ENCODE measurements at regions of chr1 and their contacts with region 1.

Region 1: GRCh38 chr1:232508130-232508701 is 121.7 kb downstream of the SIPA1L2 start:
- DNase-seq: peak; percentile 40
- H3K4me3 Mint-ChIP-seq: no peak overlapping the region
- H3K27ac Mint-ChIP-seq: peak overlapping the region; percentile 70
- H3K4me1 Mint-ChIP-seq: peaks cover 40% of the 10 kb centered on the region
- H3K27me3 Mint-ChIP-seq: no peaks in the 10 kb centered on the region
- CTCF ChIP-seq: peak; percentile 5

Region 2: DNA sequence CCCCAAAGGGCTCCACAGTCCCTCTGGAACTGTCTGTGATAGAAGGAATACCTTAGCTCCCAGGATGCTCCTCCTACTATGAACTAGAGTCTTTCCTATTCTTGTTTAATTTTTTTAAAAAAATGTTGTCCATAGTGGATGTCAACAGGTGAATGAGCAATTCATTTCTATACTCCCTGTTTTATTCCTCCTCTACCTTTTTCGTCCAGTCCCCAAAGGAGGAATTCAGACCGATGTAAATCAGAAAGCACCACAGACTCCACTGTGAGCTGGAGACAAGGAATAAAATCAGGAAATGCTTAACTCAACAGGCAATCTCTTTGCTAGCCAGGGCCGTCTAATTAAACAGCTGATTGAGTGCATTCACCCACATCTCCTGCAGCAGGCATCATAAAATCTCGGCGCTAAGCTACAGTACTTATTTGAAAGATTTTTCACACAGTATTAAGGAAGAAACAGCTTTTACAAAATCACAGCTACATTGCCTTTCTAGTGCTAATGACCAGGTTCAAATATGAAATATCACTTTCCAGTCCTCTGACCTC is 259.9 kb before region 1 on chr1:
- CTCF ChIA-PET with region 1: no interaction called
- POLR2A ChIA-PET with region 1: no interaction called
- intact Hi-C with region 1: no loop called
- DNase-seq: no peak
- H3K4me3 Mint-ChIP-seq: no peak overlapping the region
- H3K27ac Mint-ChIP-seq: no peak overlapping the region
- H3K4me1 Mint-ChIP-seq: no peaks in the 10 kb centered on the region
- H3K27me3 Mint-ChIP-seq: no peaks in the 10 kb centered on the region
- CTCF ChIP-seq: no peak

Region 3: DNA sequence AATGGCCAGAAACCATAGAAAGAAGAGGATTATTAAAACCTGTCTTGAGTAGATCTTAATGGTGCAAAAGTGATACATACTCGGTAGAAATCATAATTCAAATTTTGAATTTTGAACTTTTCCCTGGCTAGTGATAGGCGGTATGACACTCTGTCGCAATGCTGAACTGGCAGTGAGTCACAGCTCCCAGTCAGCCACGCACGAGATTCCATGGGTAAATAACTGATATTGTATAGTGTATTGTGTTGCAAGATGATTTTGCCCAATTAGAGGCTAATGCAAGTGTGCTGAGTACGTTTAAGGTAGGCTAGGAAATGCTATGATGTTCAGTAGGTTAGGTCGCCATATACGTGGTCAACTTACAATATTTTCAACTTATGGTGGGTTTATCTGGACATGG is 85.3 kb before region 1 on chr1:
- CTCF ChIA-PET with region 1: interaction called, 3 read pairs
- POLR2A ChIA-PET with region 1: interaction called, 17 read pairs
- intact Hi-C with region 1: no loop called
- DNase-seq: peak; percentile 94
- H3K4me3 Mint-ChIP-seq: no peak overlapping the region
- H3K27ac Mint-ChIP-seq: peak overlapping the region; percentile 81
- H3K4me1 Mint-ChIP-seq: peaks cover 27% of the 10 kb centered on the region
- H3K27me3 Mint-ChIP-seq: no peaks in the 10 kb centered on the region
- CTCF ChIP-seq: no peak

Region 4: GRCh38 chr1:232477728-232478127 is 30.5 kb before region 1 on chr1:
- CTCF ChIA-PET with region 1: no interaction called
- POLR2A ChIA-PET with region 1: interaction called, 12 read pairs
- intact Hi-C with region 1: no loop called
- DNase-seq: peak; percentile 99
- H3K4me3 Mint-ChIP-seq: no peak overlapping the region
- H3K27ac Mint-ChIP-seq: peak overlapping the region; percentile 61
- H3K4me1 Mint-ChIP-seq: peaks cover 34% of the 10 kb centered on the region
- H3K27me3 Mint-ChIP-seq: no peaks in the 10 kb centered on the region
- CTCF ChIP-seq: no peak

Region 5: DNA sequence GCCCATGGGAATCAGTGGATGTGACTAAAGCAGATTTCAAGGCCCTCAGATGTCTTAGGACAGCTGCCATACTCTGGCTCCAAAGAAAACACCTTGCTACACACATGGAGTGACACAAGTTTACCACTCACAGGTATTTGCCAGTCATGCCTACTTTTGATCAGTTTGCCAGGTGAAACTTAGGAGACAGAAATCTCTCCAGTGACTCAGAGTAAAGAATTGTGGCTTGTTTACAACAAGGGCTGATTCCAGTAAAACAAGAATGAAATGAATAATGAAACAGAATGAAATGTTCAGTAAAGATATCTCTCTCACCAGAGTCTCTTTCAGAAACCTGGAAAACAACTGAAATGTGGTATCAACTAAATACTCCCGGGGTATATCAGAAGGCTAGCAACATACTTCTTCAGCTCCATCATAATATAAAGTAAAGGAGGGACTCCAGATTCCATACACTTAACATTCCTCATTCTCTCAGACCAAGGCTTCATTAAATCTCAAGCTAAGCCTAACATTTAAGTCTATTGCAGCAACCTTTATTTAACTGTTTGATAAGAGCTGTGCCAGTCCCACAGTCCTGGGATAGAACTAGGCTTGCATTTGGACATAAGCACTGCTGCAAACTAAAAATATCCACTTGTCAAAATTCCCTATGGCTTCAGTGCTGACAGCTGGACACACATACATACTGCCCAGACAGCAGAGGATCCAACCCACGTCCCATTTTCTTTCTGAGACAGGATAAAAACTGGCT is 21.6 kb before region 1 on chr1:
- CTCF ChIA-PET with region 1: interaction called, 4 read pairs
- POLR2A ChIA-PET with region 1: interaction called, 43 read pairs
- intact Hi-C with region 1: no loop called
- DNase-seq: peak; percentile 89
- H3K4me3 Mint-ChIP-seq: no peak overlapping the region
- H3K27ac Mint-ChIP-seq: peak overlapping the region; percentile 92
- H3K4me1 Mint-ChIP-seq: peaks cover 15% of the 10 kb centered on the region
- H3K27me3 Mint-ChIP-seq: no peaks in the 10 kb centered on the region
- CTCF ChIP-seq: no peak

Region 6: GRCh38 chr1:232519186-232519585 is 11.0 kb after region 1 on chr1:
- CTCF ChIA-PET with region 1: interaction called, 7 read pairs
- POLR2A ChIA-PET with region 1: interaction called, 15 read pairs
- intact Hi-C with region 1: no loop called
- DNase-seq: no peak
- H3K4me3 Mint-ChIP-seq: no peak overlapping the region
- H3K27ac Mint-ChIP-seq: no peak overlapping the region
- H3K4me1 Mint-ChIP-seq: peaks cover 18% of the 10 kb centered on the region
- H3K27me3 Mint-ChIP-seq: no peaks in the 10 kb centered on the region
- CTCF ChIP-seq: no peak

Region 7: GRCh38 chr1:232538224-232538942 is 30.2 kb after region 1 on chr1:
- CTCF ChIA-PET with region 1: interaction called, 4 read pairs
- POLR2A ChIA-PET with region 1: interaction called, 20 read pairs
- intact Hi-C with region 1: no loop called
- DNase-seq: peak; percentile 93
- H3K4me3 Mint-ChIP-seq: peak overlapping the region; percentile 48
- H3K27ac Mint-ChIP-seq: peak overlapping the region; percentile 86
- H3K4me1 Mint-ChIP-seq: peaks cover 48% of the 10 kb centered on the region
- H3K27me3 Mint-ChIP-seq: no peaks in the 10 kb centered on the region
- CTCF ChIP-seq: no peak

Region 8: DNA sequence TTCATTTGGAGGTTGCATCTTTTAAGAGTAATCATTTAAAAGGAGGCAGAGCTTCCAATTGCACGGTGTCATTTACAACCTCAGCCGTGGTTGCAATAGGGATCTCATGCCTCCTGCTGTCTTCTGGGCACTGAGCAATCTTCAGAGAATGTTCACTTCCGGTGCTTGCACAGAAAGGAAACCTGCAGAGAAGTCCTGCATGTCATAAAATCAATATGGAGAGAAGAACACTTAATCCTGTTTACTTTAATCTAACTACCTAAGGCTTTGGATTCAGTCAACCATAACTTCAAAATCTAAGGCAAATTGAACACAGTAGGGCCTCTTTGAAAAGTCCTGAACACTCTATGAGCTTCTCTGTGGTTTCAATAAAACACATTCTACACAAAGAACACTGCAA is 285.7 kb after region 1 on chr1:
- CTCF ChIA-PET with region 1: no interaction called
- POLR2A ChIA-PET with region 1: no interaction called
- intact Hi-C with region 1: no loop called
- DNase-seq: peak; percentile 86
- H3K4me3 Mint-ChIP-seq: no peak overlapping the region
- H3K27ac Mint-ChIP-seq: no peak overlapping the region
- H3K4me1 Mint-ChIP-seq: peaks cover 16% of the 10 kb centered on the region
- H3K27me3 Mint-ChIP-seq: no peaks in the 10 kb centered on the region
- CTCF ChIP-seq: peak; percentile 48

Region 9: DNA sequence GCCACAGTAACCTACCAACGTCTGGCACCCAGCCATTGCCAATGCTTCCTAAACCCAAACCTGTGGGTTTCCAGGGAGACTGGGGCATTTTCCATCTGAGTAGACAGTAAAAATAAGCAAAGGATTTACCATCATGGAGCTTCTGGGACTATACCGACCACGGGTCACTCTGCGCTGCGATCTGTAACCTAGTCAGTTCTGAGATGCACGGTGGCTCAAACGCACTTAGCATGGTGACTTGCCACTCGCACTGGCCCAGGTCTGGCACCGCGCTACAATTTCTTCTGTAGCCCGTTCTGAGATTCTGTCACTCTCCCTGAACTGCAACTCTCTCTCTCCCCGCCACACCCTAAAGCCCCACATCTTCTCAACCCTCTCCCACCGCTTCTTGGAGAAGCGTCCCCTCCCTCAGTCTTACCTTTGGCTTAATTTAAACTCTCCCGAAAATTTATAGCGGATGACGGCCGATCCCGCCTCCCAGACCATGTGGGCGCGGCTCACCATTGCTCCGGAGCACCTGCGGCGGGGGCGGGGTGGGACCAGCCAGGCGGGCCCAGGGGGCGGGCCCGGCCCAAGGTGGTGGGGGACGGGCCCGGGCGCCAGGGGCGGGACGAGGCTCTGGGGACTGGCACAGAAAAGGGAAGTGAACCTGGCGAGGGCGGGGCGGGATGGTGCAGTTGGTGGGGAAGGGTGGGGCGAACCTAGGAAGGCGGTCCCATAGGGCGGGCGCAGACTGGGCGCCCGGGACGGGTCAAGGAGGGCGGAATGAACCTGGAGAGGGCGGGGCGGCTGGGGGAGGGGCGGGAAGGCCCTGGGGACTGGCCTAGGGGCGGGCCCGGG is 818.8 kb after region 1 on chr1:
- CTCF ChIA-PET with region 1: no interaction called
- POLR2A ChIA-PET with region 1: no interaction called
- intact Hi-C with region 1: no loop called
- DNase-seq: peak; percentile 100
- H3K4me3 Mint-ChIP-seq: peak overlapping the region; percentile 87
- H3K27ac Mint-ChIP-seq: peak overlapping the region; percentile 58
- H3K4me1 Mint-ChIP-seq: peaks cover 39% of the 10 kb centered on the region
- H3K27me3 Mint-ChIP-seq: no peaks in the 10 kb centered on the region
- CTCF ChIP-seq: no peak

Measured in MCF 10A (cell line).